Right cardiac atrium (tissue), 5 donors: ENCODE measurements at regions of chr1 and their contacts with region 1.

Region 1: GRCh38 chr1:153677718-153678505 is 576 bp upstream of the NPR1 start:
- DNase-seq: peak; percentile 48 to 73 (median 70)
- ATAC-seq: peak; percentile 66 to 72
- H3K4me3 ChIP-seq: peak overlapping the region; percentile 58
- H3K27ac ChIP-seq: peak overlapping the region; percentile 46
- H3K4me1 ChIP-seq: peaks cover 2% of the 10 kb centered on the region
- H3K27me3 ChIP-seq: no peaks in the 10 kb centered on the region

Region 2: GRCh38 chr1:153749408-153750005 is 71.6 kb after region 1 on chr1:
- intact Hi-C with region 1: loop called (anchors 2 to 5 kb)
- DNase-seq: peak; percentile 84 to 93 (median 93)
- ATAC-seq: peak; percentile 88 to 92
- H3K4me3 ChIP-seq: no peak overlapping the region
- H3K27ac ChIP-seq: peak overlapping the region; percentile 65
- H3K4me1 ChIP-seq: peaks cover 10% of the 10 kb centered on the region
- H3K27me3 ChIP-seq: no peaks in the 10 kb centered on the region

Region 3: DNA sequence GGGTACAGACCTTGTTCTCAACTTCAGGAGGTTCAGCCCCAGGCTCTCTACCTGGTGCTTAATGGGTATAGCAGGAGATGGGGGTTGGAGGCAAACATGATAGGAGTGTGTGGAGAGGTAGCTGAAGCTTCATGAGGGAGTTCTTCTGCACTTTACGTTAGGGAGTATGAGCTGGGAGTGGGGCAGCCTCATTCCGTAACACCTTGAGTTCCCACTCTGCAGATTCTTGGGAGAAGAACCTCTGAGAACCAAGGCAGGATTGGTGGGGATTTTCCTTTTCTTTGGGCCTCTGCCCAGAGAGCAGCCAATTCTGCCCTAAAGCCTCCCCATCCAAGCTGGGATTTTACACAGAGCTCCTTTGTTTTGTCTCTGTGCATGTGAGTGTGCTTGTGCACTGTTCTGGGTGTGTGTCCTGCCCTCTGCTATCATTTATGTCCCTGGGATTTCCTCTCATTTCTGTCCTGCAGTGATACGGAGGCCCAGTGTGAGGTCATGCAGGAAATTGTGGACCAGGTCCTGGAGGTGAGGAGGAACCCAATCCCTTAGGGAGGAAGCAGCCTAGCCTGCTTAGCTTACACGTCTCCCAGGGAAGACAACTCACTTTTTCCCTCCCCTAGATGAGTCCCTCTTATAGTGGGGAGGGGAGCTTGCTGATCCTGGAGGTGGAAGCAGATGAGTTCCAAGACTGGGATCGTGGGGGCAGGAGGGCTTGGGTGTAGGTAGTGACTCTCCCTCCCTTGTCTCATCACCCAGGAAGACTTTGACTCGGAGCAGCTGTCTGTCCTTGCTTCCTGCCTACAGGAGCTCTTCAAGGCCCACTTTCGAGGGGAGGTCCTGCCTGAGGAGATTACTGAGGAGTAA is 85.7 kb after region 1 on chr1:
- intact Hi-C with region 1: no loop called
- DNase-seq: peak in 2 of 3 donors; percentile 52 to 59
- ATAC-seq: peak; percentile 86 to 96
- H3K4me3 ChIP-seq: no peak overlapping the region
- H3K27ac ChIP-seq: peak overlapping the region; percentile 60
- H3K4me1 ChIP-seq: peaks cover 8% of the 10 kb centered on the region
- H3K27me3 ChIP-seq: no peaks in the 10 kb centered on the region

Region 4: GRCh38 chr1:153775458-153776327 is 97.8 kb after region 1 on chr1:
- intact Hi-C with region 1: loop called in 1 of 4 experiments (anchors 5 kb)
- DNase-seq: peak; percentile 79 to 90 (median 87)
- ATAC-seq: peak; percentile 28 to 43
- H3K4me3 ChIP-seq: peak overlapping the region; percentile 44
- H3K27ac ChIP-seq: peak overlapping the region; percentile 71
- H3K4me1 ChIP-seq: peaks cover 17% of the 10 kb centered on the region
- H3K27me3 ChIP-seq: no peaks in the 10 kb centered on the region

Region 5: DNA sequence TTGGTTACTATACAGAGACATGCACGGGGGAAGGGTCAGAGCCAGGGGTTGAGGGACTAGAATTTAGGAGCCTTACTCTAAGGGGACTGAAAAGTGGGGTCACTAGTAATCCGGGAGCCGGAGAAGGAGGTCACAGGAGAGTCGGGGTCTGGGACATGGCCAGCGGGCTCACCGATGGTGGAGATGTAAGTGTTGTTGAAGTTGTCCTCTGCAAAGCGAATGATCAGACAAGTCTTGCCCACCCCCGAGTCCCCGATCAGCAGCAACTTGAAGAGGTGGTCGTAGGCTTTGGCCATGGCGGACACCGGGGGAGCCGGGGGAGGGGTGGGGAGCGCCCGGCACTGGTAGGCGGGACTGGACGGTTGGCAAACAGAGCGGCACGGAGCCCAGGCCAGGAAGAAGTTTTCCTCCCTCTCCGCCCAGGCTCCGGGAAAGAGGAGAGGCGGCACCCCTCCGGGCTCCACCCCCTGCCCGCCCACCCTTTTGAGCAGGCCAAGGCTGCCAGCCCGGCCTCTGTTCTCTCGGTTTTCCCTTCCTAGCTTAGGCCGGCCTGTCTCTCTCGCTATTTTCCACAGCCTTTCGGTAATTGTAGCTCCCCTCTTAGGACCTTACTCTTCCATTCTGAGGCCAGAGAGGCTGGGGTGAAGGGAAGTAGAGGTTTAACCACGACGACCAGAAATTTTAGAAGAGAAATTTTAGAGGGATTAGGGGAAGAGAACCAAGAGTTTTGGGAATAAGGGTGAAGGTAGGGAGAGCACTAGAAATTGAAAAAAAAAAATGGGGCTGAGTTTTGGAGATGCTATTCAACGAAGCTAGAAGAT is 308.2 kb after region 1 on chr1 and contains the start of gene RAB13:
- intact Hi-C with region 1: loop called (anchors 5 to 10 kb)
- DNase-seq: peak; percentile 92 to 96 (median 94)
- ATAC-seq: peak; percentile 90 to 92
- H3K4me3 ChIP-seq: peak within 1 kb of the TSS; percentile 60
- H3K27ac ChIP-seq: peak within 1 kb of the TSS; percentile 98
- H3K4me1 ChIP-seq: peaks cover 3% of the 10 kb centered on the region
- H3K27me3 ChIP-seq: no peaks in the 10 kb centered on the region
- total RNA-seq, gene RAB13: 62.2 to 78.2 (median 69.5) TPM